ENCODE measurements at regions of chr10 and their contacts with region 1.

Region 1: GRCh38 chr10:4512671-4513240 is 313.3 kb upstream of the AKR1E2 start:
- DNase-seq: peak; percentile 78

Region 2: DNA sequence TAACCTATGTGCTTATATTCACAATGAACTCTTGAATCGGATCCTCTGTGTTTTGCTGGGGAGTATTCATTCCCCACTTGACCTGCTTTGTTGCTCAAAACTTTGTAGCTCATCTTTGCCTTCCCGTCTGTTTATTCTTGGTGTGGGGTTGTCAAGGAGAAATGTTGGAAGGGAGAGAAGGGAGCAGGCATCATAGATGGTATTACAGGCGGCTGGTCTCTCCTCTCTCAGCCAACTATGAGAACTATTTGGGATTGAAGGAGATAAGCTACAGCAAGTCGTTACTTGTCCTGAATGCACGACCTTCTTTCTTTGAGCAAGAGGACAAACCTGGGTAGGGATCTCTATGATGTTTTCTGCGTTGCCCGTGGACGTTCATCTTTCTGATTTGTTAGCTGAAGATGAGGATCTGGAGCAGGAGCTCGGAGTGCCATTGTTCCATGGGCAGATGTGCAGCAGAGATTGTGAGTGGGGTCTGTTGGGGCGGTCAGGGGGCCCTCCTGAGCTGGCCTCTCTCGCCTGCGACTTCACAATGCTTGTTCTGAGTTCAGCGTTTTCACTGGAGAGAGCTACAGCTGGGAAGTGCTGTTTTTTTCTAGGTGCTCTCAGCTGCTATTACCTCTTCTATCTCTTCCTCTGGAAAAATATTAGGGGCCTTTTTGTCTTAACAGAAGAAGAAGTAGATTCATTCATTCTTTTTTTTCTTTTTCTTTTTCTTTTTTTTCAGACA is 600.9 kb before region 1 on chr10:
- intact Hi-C with region 1: loop called (anchors 10 kb)
- DNase-seq: no peak

Region 3: DNA sequence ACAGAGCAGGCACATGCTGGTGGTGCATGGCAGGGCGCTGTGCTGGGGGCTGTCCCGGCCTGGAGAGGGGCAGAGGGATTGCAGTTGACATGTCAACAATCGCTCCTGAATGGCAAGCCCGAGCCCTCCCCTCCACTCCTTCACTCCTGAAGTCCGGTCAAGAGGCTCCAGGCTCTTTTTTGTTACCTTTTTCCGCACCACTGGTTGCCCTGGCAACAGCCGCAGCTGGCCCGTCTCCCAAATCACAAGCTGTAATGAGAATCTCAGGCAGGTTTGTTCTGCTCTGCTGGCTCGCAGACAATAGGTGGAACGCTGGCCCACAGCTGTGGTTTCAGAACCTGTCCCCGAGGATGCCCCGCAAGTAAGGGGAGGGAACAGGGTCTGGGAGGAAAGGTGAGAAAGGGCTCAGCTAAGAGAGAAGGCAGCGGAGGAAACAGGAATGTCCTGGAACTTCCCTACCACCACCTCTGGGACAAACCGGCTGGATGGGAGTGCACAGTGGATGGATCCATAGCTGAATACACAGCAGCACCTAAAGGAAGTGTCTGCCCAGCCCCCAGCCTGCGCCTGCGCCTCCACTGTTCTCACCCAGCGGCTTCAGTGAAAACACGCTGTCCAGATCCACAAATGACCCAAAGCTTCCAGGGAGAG is 1070.9 kb after region 1 on chr10:
- intact Hi-C with region 1: no loop called
- DNase-seq: no peak

Measured in cardiac septum (tissue), 1 donor.